Caco-2 (cell line): ENCODE measurements at regions of chr4 and their contacts with region 1.

Region 1: DNA sequence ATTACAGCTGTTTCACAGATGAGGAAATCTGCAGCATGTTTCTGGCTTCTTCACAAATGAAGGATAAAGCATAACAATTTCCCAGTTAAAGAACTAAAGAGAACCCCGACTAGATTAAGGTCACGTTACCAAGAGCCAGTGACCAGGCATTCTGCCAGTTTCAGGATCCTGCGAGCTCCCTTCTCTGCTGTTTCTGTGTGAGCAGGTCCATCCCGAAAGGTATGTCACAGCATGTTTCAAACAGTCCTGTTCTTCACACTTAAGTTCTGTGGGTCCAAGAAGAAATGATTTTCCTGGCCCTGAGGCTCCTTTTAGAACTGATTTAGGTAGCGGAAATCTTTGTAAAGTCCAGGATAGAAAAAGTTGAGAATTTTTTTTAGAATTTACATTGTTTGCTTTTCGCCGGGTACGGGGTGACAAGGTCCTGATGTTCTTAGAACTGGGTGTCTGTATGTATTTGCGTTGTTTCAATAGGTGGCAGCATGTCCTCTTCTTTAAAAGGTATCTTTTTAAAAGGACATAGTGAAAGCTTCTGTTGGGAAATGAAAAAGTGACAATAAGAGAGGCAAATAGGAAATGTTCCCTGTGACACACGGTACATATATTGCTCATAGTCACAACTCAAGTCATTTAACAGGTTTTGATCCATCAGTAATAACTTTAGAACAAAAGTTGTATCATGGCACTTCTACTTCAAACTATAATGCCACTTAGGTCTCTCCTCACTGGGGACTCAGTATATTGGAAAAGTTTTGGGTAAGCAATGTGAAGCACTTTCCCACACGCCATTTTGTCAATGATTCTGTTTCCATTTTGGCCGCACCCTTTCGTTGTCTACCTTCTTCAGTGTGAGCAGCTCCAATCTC is 18.4 kb downstream of the IL21 start:
- DNase-seq: peak in 1 of 2 experiments; percentile 42
- H3K4me3 ChIP-seq: no peak overlapping the region
- H3K4me3 Mint-ChIP-seq: peak overlapping the region; percentile 20
- H3K27ac Mint-ChIP-seq: no peak overlapping the region
- H3K4me1 ChIP-seq: peaks cover 11% of the 10 kb centered on the region; the same call in 1 of the 2 replicates
- H3K4me1 Mint-ChIP-seq: peaks cover 11% of the 10 kb centered on the region
- H3K27me3 ChIP-seq: no peaks in the 10 kb centered on the region
- H3K27me3 Mint-ChIP-seq: peaks cover 17% of the 10 kb centered on the region
- CTCF ChIP-seq: peak; percentile 33 to 40

Region 2: GRCh38 chr4:122652379-122652778 is 49.9 kb after region 1 on chr4:
- CTCF ChIA-PET with region 1: no interaction called
- POLR2A ChIA-PET with region 1: no interaction called
- intact Hi-C with region 1: loop called (anchors 5 kb)
- DNase-seq: peak in 1 of 2 experiments; percentile 43
- H3K4me3 ChIP-seq: no peak overlapping the region
- H3K4me3 Mint-ChIP-seq: no peak overlapping the region
- H3K27ac Mint-ChIP-seq: no peak overlapping the region
- H3K4me1 ChIP-seq: 0 out of 2 replicates have a peak, but pooled peaks cover 5% of the 10 kb centered on the region
- H3K4me1 Mint-ChIP-seq: no peaks in the 10 kb centered on the region
- H3K27me3 ChIP-seq: no peaks in the 10 kb centered on the region
- H3K27me3 Mint-ChIP-seq: no peaks in the 10 kb centered on the region
- CTCF ChIP-seq: peak; percentile 26 to 38

Region 3: DNA sequence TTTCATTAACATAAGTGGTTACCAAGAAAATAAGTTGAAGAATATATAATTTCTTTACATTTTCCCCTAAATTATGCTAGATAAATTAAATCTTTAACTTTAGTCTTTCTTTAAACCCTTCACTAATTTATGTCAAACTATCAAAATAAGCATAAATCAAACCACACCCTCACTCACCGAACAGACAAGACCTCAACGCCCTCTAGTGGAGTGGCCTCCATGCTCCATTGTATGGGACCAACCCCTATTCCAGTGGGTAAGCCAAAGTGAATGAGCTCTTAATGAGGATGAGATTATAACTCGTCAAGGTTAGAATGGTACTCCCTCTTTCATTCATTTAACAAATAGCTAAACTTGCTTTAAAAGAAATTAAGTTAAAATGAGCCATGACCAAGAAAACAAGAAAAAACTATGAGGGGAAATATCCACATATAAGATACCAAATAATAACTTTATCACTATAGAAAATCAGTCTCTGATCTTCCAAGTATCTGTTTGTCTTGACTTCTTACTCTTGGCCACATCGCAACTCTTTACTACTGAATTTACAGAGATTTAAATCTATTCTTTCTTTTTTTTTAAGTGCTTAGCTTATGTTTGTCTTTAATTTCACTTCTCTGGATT is 114.4 kb after region 1 on chr4:
- CTCF ChIA-PET with region 1: interaction called, 29 read pairs
- POLR2A ChIA-PET with region 1: no interaction called
- intact Hi-C with region 1: loop called (anchors 1 kb)
- DNase-seq: peak; percentile 65 to 73
- H3K4me3 ChIP-seq: no peak overlapping the region
- H3K4me3 Mint-ChIP-seq: no peak overlapping the region
- H3K27ac Mint-ChIP-seq: no peak overlapping the region
- H3K4me1 ChIP-seq: no peaks in the 10 kb centered on the region
- H3K4me1 Mint-ChIP-seq: peaks cover 6% of the 10 kb centered on the region
- H3K27me3 ChIP-seq: no peaks in the 10 kb centered on the region
- H3K27me3 Mint-ChIP-seq: no peaks in the 10 kb centered on the region
- CTCF ChIP-seq: peak; percentile 78 to 88

Region 4: GRCh38 chr4:122758033-122758432 is 155.5 kb after region 1 on chr4:
- CTCF ChIA-PET with region 1: no interaction called
- POLR2A ChIA-PET with region 1: no interaction called
- intact Hi-C with region 1: loop called (anchors 1 kb)
- DNase-seq: peak in 1 of 2 experiments; percentile 21
- H3K4me3 ChIP-seq: no peak overlapping the region
- H3K4me3 Mint-ChIP-seq: peak overlapping the region; percentile 23
- H3K27ac Mint-ChIP-seq: no peak overlapping the region
- H3K4me1 ChIP-seq: 0 out of 2 replicates have a peak, but pooled peaks cover 9% of the 10 kb centered on the region
- H3K4me1 Mint-ChIP-seq: peaks cover 8% of the 10 kb centered on the region
- H3K27me3 ChIP-seq: no peaks in the 10 kb centered on the region
- H3K27me3 Mint-ChIP-seq: no peaks in the 10 kb centered on the region
- CTCF ChIP-seq: peak; percentile 56 to 57

Region 5: GRCh38 chr4:122914292-122914904 is 311.9 kb after region 1 on chr4:
- CTCF ChIA-PET with region 1: interaction called, 6 read pairs
- POLR2A ChIA-PET with region 1: no interaction called
- intact Hi-C with region 1: loop called (anchors 1 kb)
- DNase-seq: peak in 1 of 2 experiments; percentile 4
- H3K4me3 ChIP-seq: no peak overlapping the region
- H3K4me3 Mint-ChIP-seq: no peak overlapping the region
- H3K27ac Mint-ChIP-seq: no peak overlapping the region
- H3K4me1 ChIP-seq: no peaks in the 10 kb centered on the region
- H3K4me1 Mint-ChIP-seq: no peaks in the 10 kb centered on the region
- H3K27me3 ChIP-seq: no peaks in the 10 kb centered on the region
- H3K27me3 Mint-ChIP-seq: no peaks in the 10 kb centered on the region
- CTCF ChIP-seq: no peak

Region 6: GRCh38 chr4:122930862-122931261 is 328.4 kb after region 1 on chr4:
- CTCF ChIA-PET with region 1: no interaction called
- POLR2A ChIA-PET with region 1: no interaction called
- intact Hi-C with region 1: loop called (anchors 2 kb)
- DNase-seq: no peak
- H3K4me3 ChIP-seq: no peak overlapping the region
- H3K4me3 Mint-ChIP-seq: no peak overlapping the region
- H3K27ac Mint-ChIP-seq: no peak overlapping the region
- H3K4me1 ChIP-seq: no peaks in the 10 kb centered on the region
- H3K4me1 Mint-ChIP-seq: no peaks in the 10 kb centered on the region
- H3K27me3 ChIP-seq: no peaks in the 10 kb centered on the region
- H3K27me3 Mint-ChIP-seq: no peaks in the 10 kb centered on the region
- CTCF ChIP-seq: no peak